PC-9 (cell line): ENCODE measurements at regions of chrX and their contacts with region 1.

Region 1: DNA sequence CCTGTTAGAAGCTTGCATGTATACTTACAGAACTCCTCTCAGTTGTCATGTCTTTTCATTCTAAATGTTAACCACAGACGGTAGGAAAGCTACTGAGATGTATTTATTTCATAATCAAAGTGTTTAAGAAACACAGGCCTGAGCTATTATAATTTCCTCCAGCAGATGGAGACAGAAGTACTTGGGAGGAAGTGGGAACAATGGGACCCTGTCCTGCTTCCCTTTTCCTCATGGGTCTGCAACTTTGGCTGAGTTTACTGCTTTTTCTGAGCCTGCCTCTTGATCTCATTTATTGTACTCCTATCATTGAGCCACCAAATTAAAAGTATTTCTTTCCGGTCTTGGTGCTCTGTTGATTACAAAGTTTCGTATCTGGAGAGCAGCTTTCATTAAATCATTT is 67.7 kb upstream of the SPANXN2 start:
- DNase-seq: no peak
- H3K4me3 ChIP-seq: no peak overlapping the region
- H3K27ac ChIP-seq: no peak overlapping the region
- H3K4me1 ChIP-seq: no peaks in the 10 kb centered on the region
- H3K27me3 ChIP-seq: no peaks in the 10 kb centered on the region
- CTCF ChIP-seq: peak; percentile 60

Region 2: DNA sequence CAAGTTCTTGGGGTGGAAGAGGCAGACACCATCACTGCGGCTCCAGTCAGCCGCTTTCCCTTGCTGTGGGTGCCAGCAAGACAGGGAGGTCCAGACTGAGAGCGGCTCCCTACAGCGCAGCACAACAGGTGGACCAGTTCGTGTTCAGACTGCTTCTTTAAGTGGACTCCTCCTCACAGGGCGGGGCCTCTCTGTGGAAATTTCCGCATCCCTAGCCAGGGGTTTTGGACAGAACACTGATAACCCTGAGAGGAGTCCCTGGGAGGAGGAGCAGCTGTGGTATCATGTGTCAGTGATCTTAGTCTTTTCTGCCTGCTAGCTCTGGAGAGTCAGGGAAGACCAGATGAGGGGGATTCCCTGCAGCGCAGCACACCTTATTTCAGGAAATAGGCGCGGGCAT is 1631.7 kb before region 1 on chrX:
- CTCF ChIA-PET with region 1: no interaction called
- POLR2A ChIA-PET with region 1: no interaction called
- intact Hi-C with region 1: no loop called
- DNase-seq: no peak
- H3K4me3 ChIP-seq: no peak overlapping the region
- H3K27ac ChIP-seq: no peak overlapping the region
- H3K4me1 ChIP-seq: no peaks in the 10 kb centered on the region
- H3K27me3 ChIP-seq: 0 out of 2 replicates have a peak, but pooled peaks cover 4% of the 10 kb centered on the region
- CTCF ChIP-seq: no peak

Region 3: DNA sequence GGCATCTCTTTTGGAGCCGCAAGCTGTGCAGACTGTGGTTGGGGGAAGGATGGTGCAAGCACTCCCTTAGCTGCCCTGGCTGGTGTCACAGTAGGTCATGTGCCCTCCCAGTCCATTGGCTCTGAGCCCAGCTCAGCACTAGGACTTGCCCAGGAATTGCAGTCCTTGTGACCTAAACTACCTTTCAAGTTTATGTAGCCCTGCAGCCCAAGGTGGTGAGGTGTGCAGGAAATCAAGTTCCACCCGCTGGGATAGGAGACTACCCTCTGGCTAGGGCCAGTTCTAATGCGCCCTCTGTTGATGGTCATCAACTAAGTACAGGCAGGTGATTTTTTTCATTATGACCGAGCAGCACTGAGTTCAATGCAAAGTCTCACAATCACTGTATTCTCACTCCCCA is 430.8 kb after region 1 on chrX:
- CTCF ChIA-PET with region 1: no interaction called
- POLR2A ChIA-PET with region 1: no interaction called
- intact Hi-C with region 1: loop called (anchors 1 kb)
- DNase-seq: peak; percentile 38 to 44
- H3K4me3 ChIP-seq: no peak overlapping the region
- H3K27ac ChIP-seq: no peak overlapping the region
- H3K4me1 ChIP-seq: no peaks in the 10 kb centered on the region
- H3K27me3 ChIP-seq: no peaks in the 10 kb centered on the region
- CTCF ChIP-seq: no peak; the same call in 1 of the 2 replicates